ENCODE measurements at regions of chr18 and their contacts with region 1.

Region 1: GRCh38 chr18:28606686-28607085 is 429.8 kb upstream of the CDH2 start:
- DNase-seq: no peak
- H3K4me3 ChIP-seq: no peak overlapping the region
- H3K27ac ChIP-seq: no peak overlapping the region
- H3K4me1 ChIP-seq: no peaks in the 10 kb centered on the region
- H3K27me3 ChIP-seq: no peaks in the 10 kb centered on the region
- CTCF ChIP-seq: no peak

Region 2: DNA sequence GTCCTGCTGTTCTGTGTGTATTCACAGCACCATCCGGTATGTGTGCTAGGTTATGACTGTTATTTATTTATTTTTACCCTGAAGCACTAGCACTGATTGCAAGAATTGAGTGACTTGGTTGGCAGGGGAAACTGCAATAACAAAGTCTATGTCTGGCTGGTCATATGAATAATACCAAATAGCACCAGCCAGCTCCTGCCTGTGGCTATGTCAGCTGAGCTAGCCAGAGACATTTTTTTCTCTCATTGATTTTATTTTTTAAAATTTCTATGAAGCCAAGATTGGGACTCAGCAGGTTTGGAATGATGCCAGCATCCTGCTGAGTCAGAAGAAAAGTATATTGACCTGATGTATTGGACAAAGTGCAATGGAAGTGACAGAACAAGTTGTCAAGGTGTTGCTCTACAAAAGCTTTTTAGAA is 241.3 kb before region 1 on chr18:
- intact Hi-C with region 1: no loop called
- DNase-seq: no peak
- H3K4me3 ChIP-seq: no peak overlapping the region
- H3K27ac ChIP-seq: no peak overlapping the region
- H3K4me1 ChIP-seq: no peaks in the 10 kb centered on the region
- H3K27me3 ChIP-seq: no peaks in the 10 kb centered on the region
- CTCF ChIP-seq: no peak

Region 3: DNA sequence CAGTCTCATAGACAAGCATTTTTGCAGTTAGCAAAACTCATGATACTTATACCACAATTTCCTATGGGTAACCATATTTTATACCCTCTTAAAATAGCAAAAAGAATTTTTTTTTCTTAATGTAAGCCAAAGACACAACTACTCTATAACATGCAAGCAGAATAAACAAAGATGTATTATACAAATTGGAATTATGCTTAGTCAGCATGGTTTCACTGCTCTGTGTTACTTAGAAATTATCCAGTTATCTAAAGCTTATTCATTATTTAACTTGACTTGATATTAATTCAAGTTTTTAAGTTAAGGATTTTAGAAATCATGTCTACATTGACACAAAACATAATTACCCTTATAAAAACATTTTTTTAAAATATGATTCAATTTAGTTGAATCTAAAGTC is 20.1 kb after region 1 on chr18:
- intact Hi-C with region 1: loop called (anchors 2 kb)
- DNase-seq: no peak
- H3K4me3 ChIP-seq: no peak overlapping the region
- H3K27ac ChIP-seq: no peak overlapping the region
- H3K4me1 ChIP-seq: no peaks in the 10 kb centered on the region
- H3K27me3 ChIP-seq: no peaks in the 10 kb centered on the region
- CTCF ChIP-seq: no peak

Region 4: DNA sequence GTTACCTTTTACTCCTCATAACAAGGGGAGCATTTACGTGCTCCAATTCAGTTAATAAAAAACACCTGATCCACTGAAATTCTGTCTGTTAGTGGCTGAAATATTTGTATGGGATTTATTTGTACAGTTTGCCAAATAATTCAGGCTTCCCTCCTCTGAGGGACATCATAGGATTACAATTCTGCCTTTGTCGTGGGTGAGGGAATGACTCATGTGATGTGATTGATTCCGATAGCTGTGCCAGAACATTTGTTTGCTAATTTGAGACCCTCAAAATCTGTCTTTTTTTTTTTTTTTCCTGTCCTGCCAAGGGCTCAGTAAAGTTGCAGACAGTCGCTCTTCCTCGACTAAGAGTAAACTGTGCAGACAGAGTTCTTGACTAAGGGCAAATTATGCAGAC is 182.8 kb after region 1 on chr18:
- intact Hi-C with region 1: no loop called
- DNase-seq: no peak
- H3K4me3 ChIP-seq: no peak overlapping the region
- H3K27ac ChIP-seq: no peak overlapping the region
- H3K4me1 ChIP-seq: no peaks in the 10 kb centered on the region
- H3K27me3 ChIP-seq: no peaks in the 10 kb centered on the region
- CTCF ChIP-seq: no peak